ENCODE measurements at regions of chrX and their contacts with region 1.

Region 1: DNA sequence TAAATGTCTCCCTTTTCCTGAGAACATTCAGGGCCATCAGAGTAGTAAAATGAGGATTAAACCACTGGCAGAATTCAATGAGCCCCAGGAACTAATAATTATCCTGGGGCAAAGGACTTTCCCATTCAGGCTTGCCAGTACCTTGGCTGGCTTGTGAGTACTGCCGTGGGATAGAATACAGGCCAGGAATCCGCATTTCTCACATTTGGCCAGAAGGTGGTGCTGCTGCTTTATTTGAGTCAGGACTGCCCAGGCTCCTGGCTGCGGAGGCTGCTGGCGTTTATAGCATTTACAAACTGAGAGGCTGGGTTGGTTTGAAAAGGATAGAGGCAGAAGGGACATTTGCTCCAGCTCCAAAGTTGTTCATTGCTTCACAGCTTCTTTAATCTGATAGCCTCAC is 91.4 kb downstream of the RTL9 start:
- DNase-seq: peak; percentile 63
- ATAC-seq: peak; percentile 99
- H3K4me3 ChIP-seq: no peak overlapping the region
- H3K27ac ChIP-seq: no peak overlapping the region
- H3K4me1 ChIP-seq: no peaks in the 10 kb centered on the region
- H3K27me3 ChIP-seq: peaks cover 30% of the 10 kb centered on the region
- CTCF ChIP-seq: peak; percentile 84
- POLR2A ChIP-seq: no peak
- RAD21 ChIP-seq: peak; percentile 84

Region 2: GRCh38 chrX:109990582-109991276 is 459.3 kb before region 1 on chrX:
- CTCF ChIA-PET with region 1: no interaction called
- POLR2A ChIA-PET with region 1: no interaction called
- dilution Hi-C with region 1: no loop called
- in situ Hi-C with region 1: no loop called
- intact Hi-C with region 1: no loop called
- DNase-seq: no peak
- ATAC-seq: no peak
- H3K4me3 ChIP-seq: no peak overlapping the region
- H3K27ac ChIP-seq: no peak overlapping the region
- H3K4me1 ChIP-seq: no peaks in the 10 kb centered on the region
- H3K27me3 ChIP-seq: peaks cover 15% of the 10 kb centered on the region
- CTCF ChIP-seq: no peak
- POLR2A ChIP-seq: no peak
- RAD21 ChIP-seq: no peak

Region 3: GRCh38 chrX:110462957-110463356 is 12.9 kb after region 1 on chrX:
- CTCF ChIA-PET with region 1: no interaction called
- POLR2A ChIA-PET with region 1: no interaction called
- dilution Hi-C with region 1: no loop called
- in situ Hi-C with region 1: no loop called
- intact Hi-C with region 1: no loop called
- DNase-seq: no peak
- ATAC-seq: no peak
- H3K4me3 ChIP-seq: no peak overlapping the region
- H3K27ac ChIP-seq: no peak overlapping the region
- H3K4me1 ChIP-seq: no peaks in the 10 kb centered on the region
- H3K27me3 ChIP-seq: peaks cover 27% of the 10 kb centered on the region
- CTCF ChIP-seq: 0 out of 2 replicates have a peak, but pooled peaks have one; percentile 1
- POLR2A ChIP-seq: no peak
- RAD21 ChIP-seq: no peak

Region 4: GRCh38 chrX:110509755-110510532 is 59.9 kb after region 1 on chrX:
- CTCF ChIA-PET with region 1: no interaction called
- POLR2A ChIA-PET with region 1: no interaction called
- dilution Hi-C with region 1: no loop called
- in situ Hi-C with region 1: no loop called
- intact Hi-C with region 1: no loop called
- DNase-seq: no peak
- ATAC-seq: no peak
- H3K4me3 ChIP-seq: no peak overlapping the region
- H3K27ac ChIP-seq: no peak overlapping the region
- H3K4me1 ChIP-seq: no peaks in the 10 kb centered on the region
- H3K27me3 ChIP-seq: peaks cover 4% of the 10 kb centered on the region; the same call in 1 of the 2 replicates
- CTCF ChIP-seq: no peak
- POLR2A ChIP-seq: no peak
- RAD21 ChIP-seq: no peak

Region 5: GRCh38 chrX:110665223-110666002 is 215.4 kb after region 1 on chrX:
- CTCF ChIA-PET with region 1: no interaction called
- POLR2A ChIA-PET with region 1: no interaction called
- dilution Hi-C with region 1: no loop called
- in situ Hi-C with region 1: no loop called
- intact Hi-C with region 1: loop called (anchors 2 kb)
- DNase-seq: peak; percentile 5
- ATAC-seq: peak; percentile 59
- H3K4me3 ChIP-seq: no peak overlapping the region
- H3K27ac ChIP-seq: no peak overlapping the region
- H3K4me1 ChIP-seq: no peaks in the 10 kb centered on the region
- H3K27me3 ChIP-seq: peaks cover 4% of the 10 kb centered on the region
- CTCF ChIP-seq: peak; percentile 34
- POLR2A ChIP-seq: no peak
- RAD21 ChIP-seq: peak; percentile 17; the same call in 1 of the 2 replicates

Region 6: GRCh38 chrX:110847334-110847733 is 397.3 kb after region 1 on chrX:
- CTCF ChIA-PET with region 1: interaction called, 4 read pairs
- POLR2A ChIA-PET with region 1: no interaction called
- dilution Hi-C with region 1: no loop called
- in situ Hi-C with region 1: loop called (anchors 5 kb)
- intact Hi-C with region 1: loop called (anchors 1 kb)
- DNase-seq: peak; percentile 63
- ATAC-seq: peak; percentile 86
- H3K4me3 ChIP-seq: no peak overlapping the region
- H3K27ac ChIP-seq: no peak overlapping the region
- H3K4me1 ChIP-seq: no peaks in the 10 kb centered on the region
- H3K27me3 ChIP-seq: peaks cover 17% of the 10 kb centered on the region
- CTCF ChIP-seq: peak; percentile 66
- POLR2A ChIP-seq: no peak
- RAD21 ChIP-seq: peak; percentile 61

Region 7: GRCh38 chrX:110853610-110854009 is 403.6 kb after region 1 on chrX:
- CTCF ChIA-PET with region 1: interaction called, 4 read pairs
- POLR2A ChIA-PET with region 1: no interaction called
- dilution Hi-C with region 1: no loop called
- in situ Hi-C with region 1: loop called (anchors 5 kb)
- intact Hi-C with region 1: loop called (anchors 1 kb)
- DNase-seq: no peak
- ATAC-seq: 0 out of 2 replicates have a peak, but pooled peaks have one; percentile 29
- H3K4me3 ChIP-seq: no peak overlapping the region
- H3K27ac ChIP-seq: no peak overlapping the region
- H3K4me1 ChIP-seq: no peaks in the 10 kb centered on the region
- H3K27me3 ChIP-seq: peaks cover 24% of the 10 kb centered on the region
- CTCF ChIP-seq: 0 out of 2 replicates have a peak, but pooled peaks have one; percentile 24
- POLR2A ChIP-seq: no peak
- RAD21 ChIP-seq: no peak

Region 8: GRCh38 chrX:111100186-111100980 is 650.3 kb after region 1 on chrX:
- CTCF ChIA-PET with region 1: no interaction called
- POLR2A ChIA-PET with region 1: no interaction called
- dilution Hi-C with region 1: no loop called
- in situ Hi-C with region 1: no loop called
- intact Hi-C with region 1: loop called (anchors 2 kb)
- DNase-seq: peak; percentile 24
- ATAC-seq: peak; percentile 48; the same call in 1 of the 2 replicates
- H3K4me3 ChIP-seq: no peak overlapping the region
- H3K27ac ChIP-seq: no peak overlapping the region
- H3K4me1 ChIP-seq: no peaks in the 10 kb centered on the region
- H3K27me3 ChIP-seq: peaks cover 17% of the 10 kb centered on the region
- CTCF ChIP-seq: peak; percentile 50
- POLR2A ChIP-seq: no peak
- RAD21 ChIP-seq: peak; percentile 49

Region 9: GRCh38 chrX:111244235-111244750 is 794.2 kb after region 1 on chrX:
- CTCF ChIA-PET with region 1: no interaction called
- POLR2A ChIA-PET with region 1: no interaction called
- dilution Hi-C with region 1: no loop called
- in situ Hi-C with region 1: loop called (anchors 10 kb)
- intact Hi-C with region 1: loop called (anchors 1 kb)
- DNase-seq: peak; percentile 14
- ATAC-seq: no peak
- H3K4me3 ChIP-seq: no peak overlapping the region
- H3K27ac ChIP-seq: no peak overlapping the region
- H3K4me1 ChIP-seq: no peaks in the 10 kb centered on the region
- H3K27me3 ChIP-seq: peaks cover 9% of the 10 kb centered on the region
- CTCF ChIP-seq: peak; percentile 57
- POLR2A ChIP-seq: no peak
- RAD21 ChIP-seq: peak; percentile 63

Region 10: DNA sequence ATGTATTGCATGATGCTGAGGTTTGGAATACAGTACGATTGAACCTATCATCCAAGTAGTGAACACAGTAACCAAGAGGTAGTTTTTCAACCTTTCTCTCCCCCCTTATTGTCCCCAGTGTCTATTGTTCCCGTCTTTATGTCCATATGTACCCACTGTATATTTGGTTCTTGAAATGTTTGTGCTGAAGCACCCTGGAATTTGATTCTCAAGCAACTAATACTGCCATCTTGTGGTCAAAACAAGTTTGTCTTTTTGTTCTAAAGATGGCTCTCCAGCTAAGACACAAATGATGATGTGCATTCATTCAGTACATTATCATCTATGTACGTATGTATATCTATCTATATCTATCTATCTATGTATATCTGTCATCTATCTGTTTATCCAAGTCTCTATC is 995.4 kb after region 1 on chrX:
- CTCF ChIA-PET with region 1: no interaction called
- POLR2A ChIA-PET with region 1: no interaction called
- dilution Hi-C with region 1: no loop called
- in situ Hi-C with region 1: no loop called
- intact Hi-C with region 1: loop called (anchors 5 kb)
- DNase-seq: peak; percentile 32
- ATAC-seq: 0 out of 2 replicates have a peak, but pooled peaks have one; percentile 35
- H3K4me3 ChIP-seq: no peak overlapping the region
- H3K27ac ChIP-seq: no peak overlapping the region
- H3K4me1 ChIP-seq: no peaks in the 10 kb centered on the region
- H3K27me3 ChIP-seq: peaks cover 2% of the 10 kb centered on the region; the same call in 1 of the 2 replicates
- CTCF ChIP-seq: peak; percentile 55
- POLR2A ChIP-seq: no peak
- RAD21 ChIP-seq: no peak; the same call in 1 of the 2 replicates

Measured in IMR-90 (cell line).